GM12878 (cell line): ENCODE measurements at regions of chr7 and their contacts with region 1.

Region 1: GRCh38 chr7:37495574-37496184 is 47.0 kb upstream of the ELMO1 start:
- DNase-seq: no peak
- ATAC-seq: peak; percentile 58; the same call in 1 of the 3 replicates
- H3K4me3 ChIP-seq: no peak overlapping the region
- H3K27ac ChIP-seq: no peak overlapping the region
- H3K4me1 ChIP-seq: peaks cover 8% of the 10 kb centered on the region; the same call in 1 of the 2 replicates
- H3K27me3 ChIP-seq: no peaks in the 10 kb centered on the region
- CTCF ChIP-seq: peak; percentile 55 to 72 (median 62)
- EP300 ChIP-seq: no peak
- POLR2A ChIP-seq: no peak
- RAD21 ChIP-seq: peak; percentile 57

Region 2: GRCh38 chr7:37234928-37235327 is 260.8 kb before region 1 on chr7:
- CTCF ChIA-PET with region 1: interaction called, 26 read pairs
- POLR2A ChIA-PET with region 1: no interaction called
- RAD21 ChIA-PET with region 1: interaction called, 10 read pairs
- SMC1A ChIA-PET with region 1: interaction called, 19 read pairs
- in situ Hi-C with region 1: no loop called
- intact Hi-C with region 1: loop called (anchors 10 kb)
- DNase-seq: no peak
- ATAC-seq: peak; percentile 46; the same call in 1 of the 3 replicates
- H3K4me3 ChIP-seq: no peak overlapping the region
- H3K27ac ChIP-seq: no peak overlapping the region
- H3K4me1 ChIP-seq: no peaks in the 10 kb centered on the region
- H3K27me3 ChIP-seq: no peaks in the 10 kb centered on the region
- CTCF ChIP-seq: peak; percentile 52 to 57 (median 52); a peak in 4 of 6 replicates
- EP300 ChIP-seq: no peak
- POLR2A ChIP-seq: no peak
- RAD21 ChIP-seq: peak; percentile 69

Region 3: GRCh38 chr7:37510043-37510634 is 14.5 kb after region 1 on chr7:
- CTCF ChIA-PET with region 1: interaction called, 77 read pairs
- POLR2A ChIA-PET with region 1: no interaction called
- RAD21 ChIA-PET with region 1: interaction called, 4 read pairs
- SMC1A ChIA-PET with region 1: interaction called, 18 read pairs
- in situ Hi-C with region 1: no loop called
- intact Hi-C with region 1: no loop called
- DNase-seq: no peak
- ATAC-seq: peak; percentile 80
- H3K4me3 ChIP-seq: no peak overlapping the region
- H3K27ac ChIP-seq: no peak overlapping the region
- H3K4me1 ChIP-seq: no peaks in the 10 kb centered on the region
- H3K27me3 ChIP-seq: peaks cover 0 to 4% of the 10 kb centered on the region in 2 experiments; a peak in 2 of 4 replicates
- CTCF ChIP-seq: peak; percentile 59 to 77 (median 76)
- EP300 ChIP-seq: no peak
- POLR2A ChIP-seq: no peak
- RAD21 ChIP-seq: peak; percentile 71

Region 4: DNA sequence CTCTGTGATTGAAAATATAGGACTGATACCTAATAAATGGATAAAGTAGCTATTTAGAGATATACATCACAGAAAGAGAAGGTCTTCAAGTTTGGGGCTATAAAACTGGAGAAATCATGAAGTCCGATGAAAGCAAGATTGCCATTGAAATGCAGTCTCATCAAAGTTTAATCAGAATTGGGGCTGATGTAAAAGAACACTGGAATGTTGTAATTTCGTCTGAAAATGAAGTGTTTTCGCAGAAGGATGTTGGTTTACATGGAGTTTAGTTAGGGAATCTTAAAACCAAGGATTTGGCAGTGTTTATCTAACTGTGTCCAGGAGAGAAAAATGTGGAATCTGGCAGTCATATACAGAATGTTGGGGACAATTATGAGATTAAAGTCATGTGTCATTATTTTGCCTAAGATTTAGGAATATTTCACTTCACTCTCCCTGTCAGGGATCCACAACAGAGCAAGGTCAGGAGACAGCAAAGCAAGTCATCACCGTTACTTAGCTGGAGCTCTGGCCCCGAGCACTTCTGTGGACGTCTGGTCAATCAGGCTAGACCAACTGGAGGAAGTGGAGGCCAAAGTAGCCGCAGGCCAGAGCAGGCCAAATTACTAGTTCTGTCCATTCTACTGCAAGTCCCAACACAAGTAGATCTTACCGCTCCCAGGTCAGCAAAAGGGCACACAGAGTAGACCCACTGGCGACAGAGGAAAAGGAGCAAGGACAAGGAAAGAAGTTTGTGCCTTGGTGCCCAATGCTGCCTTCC is 461.7 kb after region 1 on chr7:
- CTCF ChIA-PET with region 1: no interaction called
- POLR2A ChIA-PET with region 1: no interaction called
- RAD21 ChIA-PET with region 1: no interaction called
- SMC1A ChIA-PET with region 1: no interaction called
- in situ Hi-C with region 1: no loop called
- intact Hi-C with region 1: no loop called
- DNase-seq: no peak
- ATAC-seq: no peak
- H3K4me3 ChIP-seq: no peak overlapping the region
- H3K27ac ChIP-seq: no peak overlapping the region
- H3K4me1 ChIP-seq: no peaks in the 10 kb centered on the region
- H3K27me3 ChIP-seq: no peaks in the 10 kb centered on the region
- CTCF ChIP-seq: no peak
- EP300 ChIP-seq: no peak
- POLR2A ChIP-seq: no peak
- RAD21 ChIP-seq: no peak